PC-9 (cell line): ENCODE measurements at regions of chr13 and their contacts with region 1.

Region 1: GRCh38 chr13:40895227-40896184 is 106.1 kb downstream of the SLC25A15 start:
- DNase-seq: no peak
- H3K4me3 ChIP-seq: no peak overlapping the region
- H3K27ac ChIP-seq: no peak overlapping the region
- H3K4me1 ChIP-seq: no peaks in the 10 kb centered on the region
- H3K27me3 ChIP-seq: no peaks in the 10 kb centered on the region
- CTCF ChIP-seq: no peak

Region 2: DNA sequence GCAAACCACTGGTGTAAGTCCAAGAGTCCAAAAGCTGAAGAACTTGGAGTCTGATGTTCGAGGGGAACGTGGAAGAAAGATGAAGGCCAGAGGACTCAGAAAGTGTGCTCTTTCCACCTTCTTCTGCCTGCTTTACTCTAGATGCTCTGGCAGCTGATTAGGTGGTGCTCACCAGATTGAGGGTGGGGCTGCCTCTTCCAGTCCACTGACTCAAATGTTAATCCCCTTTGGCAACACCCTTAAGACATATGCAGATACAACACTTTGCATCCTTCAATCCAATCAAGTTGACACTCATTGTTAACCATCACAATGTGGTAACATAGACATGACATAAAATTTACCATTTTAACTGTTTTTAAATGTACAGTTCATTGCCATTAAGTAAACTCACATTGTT is 990.5 kb before region 1 on chr13:
- CTCF ChIA-PET with region 1: interaction called, 11 read pairs
- POLR2A ChIA-PET with region 1: no interaction called
- intact Hi-C with region 1: no loop called
- DNase-seq: no peak
- H3K4me3 ChIP-seq: no peak overlapping the region
- H3K27ac ChIP-seq: no peak overlapping the region
- H3K4me1 ChIP-seq: no peaks in the 10 kb centered on the region
- H3K27me3 ChIP-seq: no peaks in the 10 kb centered on the region
- CTCF ChIP-seq: no peak

Region 3: GRCh38 chr13:40764587-40765403 is 130.7 kb before region 1 on chr13:
- CTCF ChIA-PET with region 1: interaction called, 17 read pairs
- POLR2A ChIA-PET with region 1: no interaction called
- intact Hi-C with region 1: no loop called
- DNase-seq: no peak
- H3K4me3 ChIP-seq: no peak overlapping the region
- H3K27ac ChIP-seq: no peak overlapping the region
- H3K4me1 ChIP-seq: peaks cover 3% of the 10 kb centered on the region; the same call in 1 of the 2 replicates
- H3K27me3 ChIP-seq: no peaks in the 10 kb centered on the region
- CTCF ChIP-seq: no peak

Region 4: GRCh38 chr13:40992678-40993518 is 97.4 kb after region 1 on chr13:
- CTCF ChIA-PET with region 1: no interaction called
- POLR2A ChIA-PET with region 1: no interaction called
- intact Hi-C with region 1: no loop called
- DNase-seq: no peak
- H3K4me3 ChIP-seq: no peak overlapping the region; the same call in 1 of the 2 replicates
- H3K27ac ChIP-seq: peak overlapping the region; percentile 96
- H3K4me1 ChIP-seq: peaks cover 38% of the 10 kb centered on the region
- H3K27me3 ChIP-seq: no peaks in the 10 kb centered on the region
- CTCF ChIP-seq: no peak; the same call in 1 of the 2 replicates

Region 5: DNA sequence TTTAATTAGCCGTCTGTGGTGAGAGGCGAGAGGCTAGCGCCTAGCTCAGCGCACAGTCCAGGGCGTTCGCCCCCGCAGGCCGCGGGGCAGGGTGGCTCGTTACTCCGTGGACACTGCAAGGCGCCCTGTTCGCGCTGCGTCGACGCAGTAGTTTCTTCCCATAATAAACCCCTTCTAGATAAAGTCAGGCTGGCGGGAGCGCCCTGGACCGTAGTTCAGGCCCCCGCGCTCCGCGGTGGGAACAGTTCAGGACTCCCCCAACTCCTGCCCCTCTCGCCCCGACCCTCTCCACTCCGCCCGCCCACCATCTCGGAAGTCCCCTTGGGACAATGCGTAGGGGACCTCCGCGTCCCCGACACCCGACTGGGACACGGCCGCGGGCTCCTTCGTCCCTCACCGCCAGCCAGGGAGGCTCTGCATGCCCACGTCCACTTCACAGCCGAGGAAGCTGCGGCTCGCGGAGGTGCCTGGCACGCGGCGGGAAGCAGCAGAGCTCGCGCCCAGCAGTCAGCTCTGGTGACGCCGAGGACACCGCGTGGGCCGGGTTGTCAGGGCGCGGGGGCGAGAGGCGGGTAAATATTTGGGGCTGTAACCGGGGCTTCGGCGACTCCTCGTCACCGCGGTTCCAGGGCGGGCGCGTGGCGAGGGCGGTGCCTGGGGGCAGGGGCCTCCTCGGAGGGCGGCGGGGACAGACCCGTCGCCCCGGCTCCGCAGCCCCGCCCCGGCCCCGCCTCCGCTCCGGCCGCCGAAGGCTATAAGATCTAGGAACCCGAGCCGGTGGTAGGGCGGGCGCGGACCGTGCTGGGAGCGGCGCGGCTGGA is 561.5 kb after region 1 on chr13 and contains the start of gene RGCC:
- CTCF ChIA-PET with region 1: no interaction called
- POLR2A ChIA-PET with region 1: no interaction called
- intact Hi-C with region 1: no loop called
- DNase-seq: peak; percentile 46 to 77
- H3K4me3 ChIP-seq: peak within 1 kb of the TSS; percentile 62
- H3K27ac ChIP-seq: no peak within 1 kb of the TSS
- H3K4me1 ChIP-seq: 0 out of 2 replicates have a peak, but pooled peaks cover 5% of the 10 kb centered on the region
- H3K27me3 ChIP-seq: peaks cover 14% of the 10 kb centered on the region; the same call in 1 of the 2 replicates
- CTCF ChIP-seq: no peak
- total RNA-seq, gene RGCC: 3.4 and 4.8 TPM in 2 replicates